Activated naive CD4-positive, alpha-beta T cell treated with anti-CD3 and anti-CD28 coated beads for 36 hours (primary cell): ENCODE measurements at regions of chr11 and their contacts with region 1.

Region 1: DNA sequence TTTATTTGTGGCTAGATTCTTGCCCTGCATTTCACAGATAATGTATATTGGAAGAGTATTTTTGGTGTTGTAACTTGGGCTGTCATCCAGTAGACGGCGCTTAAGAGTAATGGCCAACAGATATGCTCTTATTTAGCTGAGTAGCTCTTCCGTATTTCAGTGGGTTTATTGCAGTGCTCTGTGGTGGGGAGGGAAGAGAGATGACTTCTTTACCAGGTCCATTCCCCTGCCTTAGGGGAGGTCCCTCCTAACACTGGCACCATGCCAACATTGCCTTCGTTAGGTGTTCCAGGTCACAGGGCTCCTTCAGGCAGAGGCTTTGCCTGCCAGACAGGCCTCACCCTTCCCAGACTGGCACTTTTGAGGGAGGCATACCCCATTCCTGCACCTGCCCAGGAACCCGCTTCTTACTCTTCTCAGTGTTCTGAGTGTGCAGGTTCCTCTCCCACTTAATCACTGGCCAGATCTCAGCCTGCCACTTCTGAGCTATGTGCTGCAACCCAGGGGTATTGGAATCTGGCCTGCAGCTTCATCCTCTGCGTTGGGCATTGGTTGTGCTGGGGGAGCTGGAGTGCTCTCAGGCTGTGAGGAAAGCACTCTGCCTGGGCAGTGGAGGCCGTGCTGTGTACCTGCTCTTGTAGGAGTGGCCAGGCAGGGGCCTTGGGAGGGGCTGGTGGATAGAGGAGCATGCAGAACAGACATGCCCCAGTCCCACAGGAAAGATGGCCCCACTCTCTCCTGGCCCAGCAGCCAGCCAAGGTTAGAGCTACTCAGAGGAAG is 29.4 kb upstream of the SLN start:
- DNase-seq: peak; percentile 21
- H3K4me3 Mint-ChIP-seq: no peak overlapping the region
- H3K27ac Mint-ChIP-seq: no peak overlapping the region
- H3K4me1 Mint-ChIP-seq: no peaks in the 10 kb centered on the region
- H3K27me3 Mint-ChIP-seq: peaks cover 9% of the 10 kb centered on the region

Region 2: GRCh38 chr11:107770551-107770951 is 29.3 kb after region 1 on chr11:
- CTCF ChIA-PET with region 1: interaction called, 15 read pairs
- intact Hi-C with region 1: loop called (anchors 1 kb)
- DNase-seq: no peak
- H3K4me3 Mint-ChIP-seq: no peak overlapping the region
- H3K27ac Mint-ChIP-seq: no peak overlapping the region
- H3K4me1 Mint-ChIP-seq: no peaks in the 10 kb centered on the region
- H3K27me3 Mint-ChIP-seq: peaks cover 4% of the 10 kb centered on the region

Region 3: DNA sequence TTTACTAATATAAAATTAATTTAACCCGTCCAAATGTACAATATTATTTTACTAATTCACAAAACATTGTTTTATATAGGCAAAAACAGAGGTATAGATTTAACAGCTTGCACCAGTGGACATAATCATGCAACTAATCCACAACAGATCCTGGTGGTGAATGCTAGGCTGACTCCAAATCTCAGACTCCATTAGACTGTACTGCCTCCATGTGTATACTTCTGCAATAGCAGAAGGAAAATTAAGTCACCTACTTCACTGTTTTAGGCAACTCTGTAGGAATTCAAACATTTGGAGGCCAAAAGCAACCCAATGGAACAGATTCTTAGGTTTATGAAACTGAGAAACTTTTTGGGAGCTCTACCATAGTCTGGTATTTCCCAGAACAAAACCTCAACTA is 157.0 kb after region 1 on chr11:
- CTCF ChIA-PET with region 1: interaction called, 16 read pairs
- intact Hi-C with region 1: loop called (anchors 1 kb)
- DNase-seq: no peak
- H3K4me3 Mint-ChIP-seq: no peak overlapping the region
- H3K27ac Mint-ChIP-seq: no peak overlapping the region
- H3K4me1 Mint-ChIP-seq: no peaks in the 10 kb centered on the region
- H3K27me3 Mint-ChIP-seq: no peaks in the 10 kb centered on the region

Region 4: DNA sequence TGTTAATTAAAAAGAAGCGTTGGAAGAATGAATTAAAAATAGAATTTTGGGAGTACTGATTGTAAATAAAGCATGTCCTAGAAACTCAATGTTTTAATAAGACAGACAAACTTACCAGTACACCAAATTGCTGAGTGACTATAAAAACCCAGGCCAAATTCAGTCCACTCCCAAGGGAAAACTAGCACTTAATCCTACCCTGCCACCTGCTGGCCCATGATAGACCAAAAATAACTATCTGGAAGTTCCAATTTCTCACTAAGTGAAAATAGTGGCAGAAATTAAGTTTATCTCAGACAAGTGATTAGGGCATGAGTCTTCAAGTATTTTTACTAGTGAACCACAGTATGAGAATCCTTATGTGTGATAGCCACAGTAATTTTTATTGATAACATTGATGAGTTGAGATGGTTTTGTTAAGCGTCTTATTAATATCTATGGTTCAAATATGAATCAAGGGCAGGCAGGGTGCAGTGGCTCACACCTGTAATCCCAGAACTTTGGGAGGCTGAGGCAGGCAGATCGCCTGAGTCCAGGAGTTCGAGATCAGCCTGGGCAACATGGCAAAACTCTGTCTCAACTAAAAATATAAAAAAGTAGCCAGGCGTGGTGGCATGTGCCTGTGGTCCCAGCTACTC is 913.9 kb after region 1 on chr11:
- CTCF ChIA-PET with region 1: no interaction called
- intact Hi-C with region 1: loop called (anchors 2 kb)
- DNase-seq: peak; percentile 72
- H3K4me3 Mint-ChIP-seq: no peak overlapping the region
- H3K27ac Mint-ChIP-seq: no peak overlapping the region
- H3K4me1 Mint-ChIP-seq: no peaks in the 10 kb centered on the region
- H3K27me3 Mint-ChIP-seq: no peaks in the 10 kb centered on the region